Naive thymus-derived CD4-positive, alpha-beta T cell (primary cell): ENCODE measurements at regions of chr14 and their contacts with region 1.

Region 1: GRCh38 chr14:93939304-93940229 is 12.4 kb downstream of the FAM181A start:
- DNase-seq: peak; percentile 71 to 97 (median 87)
- ATAC-seq: peak; percentile 95
- H3K4me3 ChIP-seq: peak overlapping the region; percentile 60
- H3K4me3 Mint-ChIP-seq: peak overlapping the region; percentile 18 to 83 (median 68)
- H3K27ac ChIP-seq: no peak overlapping the region
- H3K27ac Mint-ChIP-seq: peak overlapping the region in 1 of 9 donors; percentile 71
- H3K4me1 ChIP-seq: peaks cover 4 to 8% of the 10 kb centered on the region in 2 donors
- H3K4me1 Mint-ChIP-seq: peaks cover 0 to 34% (median 3%) of the 10 kb centered on the region in 7 donors
- H3K27me3 ChIP-seq: no peaks in the 10 kb centered on the region
- H3K27me3 Mint-ChIP-seq: peaks cover 0 to 16% (median 0%) of the 10 kb centered on the region in 5 donors

Region 2: GRCh38 chr14:93269341-93270068 is 670.1 kb before region 1 on chr14:
- CTCF ChIA-PET with region 1: no interaction called
- POLR2A ChIA-PET with region 1: no interaction called
- intact Hi-C with region 1: no loop called
- DNase-seq: no peak
- ATAC-seq: no peak
- H3K4me3 ChIP-seq: no peak overlapping the region
- H3K4me3 Mint-ChIP-seq: no peak overlapping the region
- H3K27ac ChIP-seq: no peak overlapping the region
- H3K27ac Mint-ChIP-seq: no peak overlapping the region
- H3K4me1 ChIP-seq: no peaks in the 10 kb centered on the region
- H3K4me1 Mint-ChIP-seq: peaks cover 0 to 47% (median 18%) of the 10 kb centered on the region in 7 donors
- H3K27me3 ChIP-seq: no peaks in the 10 kb centered on the region
- H3K27me3 Mint-ChIP-seq: no peaks in the 10 kb centered on the region

Region 3: DNA sequence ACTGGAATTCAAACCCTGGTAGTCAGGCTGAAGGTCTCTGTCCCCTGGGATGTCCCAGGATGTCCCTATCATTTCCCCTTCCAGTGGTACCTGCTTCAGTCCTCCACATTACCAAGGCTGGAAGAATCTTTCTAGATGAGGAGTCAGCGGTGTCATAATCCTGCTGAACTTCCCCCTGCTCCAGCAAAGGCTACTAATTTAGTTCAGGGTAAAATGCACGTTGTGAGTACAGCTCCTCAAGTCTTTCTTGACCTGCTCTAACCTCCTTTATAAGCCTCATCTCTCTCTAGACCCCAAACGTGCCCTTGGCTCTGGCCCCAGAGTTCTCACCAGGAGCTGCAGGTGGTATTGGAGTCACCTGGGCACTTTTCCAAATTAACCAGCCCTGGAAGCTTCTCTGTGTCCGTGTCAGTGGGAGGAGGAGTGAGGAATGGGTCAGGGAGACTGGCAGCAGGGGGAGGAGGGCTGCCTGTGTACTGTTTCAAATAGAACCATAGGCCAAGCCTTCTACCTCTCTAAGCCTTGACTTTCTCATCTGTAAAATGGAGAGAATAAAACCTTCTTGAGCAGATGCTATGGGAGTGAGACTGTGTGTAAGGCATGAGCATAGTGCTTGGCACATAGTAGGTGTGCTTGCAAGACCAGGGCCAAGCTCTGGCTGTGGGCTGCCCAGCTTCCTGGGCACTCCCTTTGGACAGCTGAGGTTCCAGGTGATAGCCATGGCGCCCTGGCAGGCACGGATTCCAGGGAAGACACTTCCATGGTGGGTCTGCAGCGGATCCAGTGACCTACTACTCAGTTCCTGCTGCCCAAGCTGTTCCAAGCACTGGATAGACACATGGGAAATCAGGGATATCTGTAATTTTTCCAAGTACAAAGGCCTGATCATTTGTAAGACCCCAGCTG is 12.3 kb after region 1 on chr14:
- CTCF ChIA-PET with region 1: interaction called, 14 read pairs
- POLR2A ChIA-PET with region 1: interaction called, 6 read pairs
- intact Hi-C with region 1: no loop called
- DNase-seq: no peak
- ATAC-seq: no peak
- H3K4me3 ChIP-seq: no peak overlapping the region
- H3K4me3 Mint-ChIP-seq: no peak overlapping the region
- H3K27ac ChIP-seq: no peak overlapping the region
- H3K27ac Mint-ChIP-seq: peak overlapping the region in 1 of 9 donors; percentile 23
- H3K4me1 ChIP-seq: peaks cover 20 to 35% of the 10 kb centered on the region in 2 donors
- H3K4me1 Mint-ChIP-seq: peaks cover 17 to 70% (median 30%) of the 10 kb centered on the region in 7 donors
- H3K27me3 ChIP-seq: no peaks in the 10 kb centered on the region
- H3K27me3 Mint-ChIP-seq: no peaks in the 10 kb centered on the region

Region 4: GRCh38 chr14:93970549-93970946 is 31.0 kb after region 1 on chr14:
- CTCF ChIA-PET with region 1: interaction called, 388 read pairs
- POLR2A ChIA-PET with region 1: interaction called, 27 read pairs
- intact Hi-C with region 1: loop called (anchors 1 kb)
- DNase-seq: peak in 8 of 9 donors; percentile 43 to 63 (median 56)
- ATAC-seq: peak; percentile 93
- H3K4me3 ChIP-seq: peak overlapping the region; percentile 72
- H3K4me3 Mint-ChIP-seq: peak overlapping the region; percentile 82 to 93 (median 89)
- H3K27ac ChIP-seq: no peak overlapping the region
- H3K27ac Mint-ChIP-seq: peak overlapping the region in 8 of 9 donors; percentile 21 to 99 (median 70)
- H3K4me1 ChIP-seq: peaks cover 13 to 24% of the 10 kb centered on the region in 2 donors
- H3K4me1 Mint-ChIP-seq: peaks cover 14 to 91% (median 19%) of the 10 kb centered on the region in 7 donors
- H3K27me3 ChIP-seq: no peaks in the 10 kb centered on the region
- H3K27me3 Mint-ChIP-seq: peaks cover 0 to 2% (median under 1%) of the 10 kb centered on the region in 5 donors

Region 5: GRCh38 chr14:93984987-93985410 is 45.4 kb after region 1 on chr14:
- CTCF ChIA-PET with region 1: interaction called, 15 read pairs
- POLR2A ChIA-PET with region 1: interaction called, 4 read pairs
- intact Hi-C with region 1: no loop called
- DNase-seq: no peak
- ATAC-seq: no peak
- H3K4me3 ChIP-seq: no peak overlapping the region
- H3K4me3 Mint-ChIP-seq: no peak overlapping the region
- H3K27ac ChIP-seq: no peak overlapping the region
- H3K27ac Mint-ChIP-seq: no peak overlapping the region
- H3K4me1 ChIP-seq: peaks cover 0 to 2% of the 10 kb centered on the region in 2 donors
- H3K4me1 Mint-ChIP-seq: peaks cover 4 to 24% (median 18%) of the 10 kb centered on the region in 7 donors
- H3K27me3 ChIP-seq: no peaks in the 10 kb centered on the region
- H3K27me3 Mint-ChIP-seq: peaks cover 0 to 3% (median 0%) of the 10 kb centered on the region in 5 donors

Region 6: GRCh38 chr14:94026173-94026888 is 86.8 kb after region 1 on chr14 and contains the start of gene OTUB2:
- CTCF ChIA-PET with region 1: interaction called, 5 read pairs
- POLR2A ChIA-PET with region 1: interaction called, 3 read pairs
- intact Hi-C with region 1: loop called in 1 of 2 experiments (anchors 1 kb)
- DNase-seq: peak; percentile 89 to 98 (median 96)
- ATAC-seq: peak; percentile 100
- H3K4me3 ChIP-seq: peak within 1 kb of the TSS; percentile 51
- H3K4me3 Mint-ChIP-seq: peak within 1 kb of the TSS; percentile 72 to 90 (median 82)
- H3K27ac ChIP-seq: no peak within 1 kb of the TSS
- H3K27ac Mint-ChIP-seq: peak within 1 kb of the TSS in 7 of 9 donors; percentile 20 to 75 (median 66)
- H3K4me1 ChIP-seq: peaks cover 5 to 12% of the 10 kb centered on the region in 2 donors
- H3K4me1 Mint-ChIP-seq: peaks cover 14 to 43% (median 18%) of the 10 kb centered on the region in 7 donors
- H3K27me3 ChIP-seq: no peaks in the 10 kb centered on the region
- H3K27me3 Mint-ChIP-seq: peaks cover 0 to 2% (median 0%) of the 10 kb centered on the region in 5 donors
- total RNA-seq, gene OTUB2: 0.11 to 2.5 (median 0.63) TPM in 4 of 5 experiments, not detected in the other

Region 7: GRCh38 chr14:94180655-94181271 is 241.2 kb after region 1 on chr14:
- CTCF ChIA-PET with region 1: interaction called, 6 read pairs
- POLR2A ChIA-PET with region 1: no interaction called
- intact Hi-C with region 1: loop called (anchors 1 to 2 kb)
- DNase-seq: peak in 7 of 9 donors; percentile 57 to 81 (median 71)
- ATAC-seq: peak; percentile 93
- H3K4me3 ChIP-seq: peak overlapping the region; percentile 5
- H3K4me3 Mint-ChIP-seq: peak overlapping the region in 8 of 10 donors; percentile 6 to 75 (median 50)
- H3K27ac ChIP-seq: peak overlapping the region; percentile 56
- H3K27ac Mint-ChIP-seq: peak overlapping the region in 8 of 9 donors; percentile 16 to 90 (median 74)
- H3K4me1 ChIP-seq: peaks cover 0 to 1% of the 10 kb centered on the region in 2 donors
- H3K4me1 Mint-ChIP-seq: peaks cover 10 to 23% (median 18%) of the 10 kb centered on the region in 7 donors
- H3K27me3 ChIP-seq: no peaks in the 10 kb centered on the region
- H3K27me3 Mint-ChIP-seq: peaks cover 0 to 36% (median 0%) of the 10 kb centered on the region in 5 donors